Ascending aorta (tissue), 2 donors: ENCODE measurements at regions of chr13 and their contacts with region 1.

Region 1: GRCh38 chr13:20566898-20567874 is at the start of gene IFT88:
- DNase-seq: peak; percentile 45 to 93
- H3K4me3 ChIP-seq: peak within 1 kb of the TSS; percentile 60 to 85
- H3K27ac ChIP-seq: peak within 1 kb of the TSS; percentile 85 to 94
- H3K4me1 ChIP-seq: peaks cover 0 to 6% of the 10 kb centered on the region in 2 donors
- H3K27me3 ChIP-seq: no peaks in the 10 kb centered on the region
- CTCF ChIP-seq: peak in 1 of 3 experiments; percentile 22
- total RNA-seq, gene IFT88: 4.9 TPM

Region 2: DNA sequence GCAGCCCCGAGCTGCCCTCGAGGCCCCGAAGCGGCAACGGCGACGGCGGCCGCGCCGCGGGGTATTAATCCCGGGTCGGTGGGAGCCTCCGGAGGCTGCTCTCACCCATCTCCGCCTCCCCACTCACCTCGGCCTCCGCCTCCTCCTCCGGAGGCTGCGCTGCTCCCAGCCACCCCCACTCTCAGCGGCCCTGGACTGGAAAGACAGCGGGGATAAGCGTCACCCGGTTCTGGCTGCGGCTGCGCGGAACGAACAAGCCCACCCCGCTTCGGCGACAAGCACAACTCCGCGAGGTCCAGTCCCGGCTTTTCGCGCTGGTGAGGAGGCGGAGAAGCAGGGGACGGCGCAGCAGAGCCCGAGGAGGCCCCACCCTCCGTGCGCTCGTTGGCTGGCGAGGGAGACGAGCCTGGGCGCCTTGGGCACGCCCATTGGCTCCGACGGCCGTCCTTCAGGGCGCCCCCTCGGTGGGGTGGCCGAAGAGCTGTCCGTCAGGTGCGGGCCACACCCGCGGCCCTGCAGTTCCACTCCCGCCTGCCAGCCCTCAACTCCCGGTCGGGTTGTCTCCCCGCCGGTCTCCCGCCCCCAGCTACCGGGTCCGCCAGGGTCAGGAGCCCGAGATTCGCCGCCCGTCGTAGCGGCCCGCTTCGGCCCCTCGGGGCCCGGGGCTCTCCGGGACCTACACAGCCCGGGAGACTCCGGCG is 703.7 kb before region 1 on chr13 and contains the start of gene ZMYM5:
- intact Hi-C with region 1: loop called (anchors 10 kb)
- DNase-seq: peak; percentile 96 to 99
- H3K4me3 ChIP-seq: peak within 1 kb of the TSS; percentile 78 to 79
- H3K27ac ChIP-seq: peak within 1 kb of the TSS; percentile 97 to 99
- H3K4me1 ChIP-seq: peaks cover 4 to 26% of the 10 kb centered on the region in 2 donors
- H3K27me3 ChIP-seq: no peaks in the 10 kb centered on the region
- CTCF ChIP-seq: peak in 1 of 3 experiments; percentile 5
- total RNA-seq, gene ZMYM5: 14.2 TPM

Region 3: GRCh38 chr13:20418953-20419352 is 148.2 kb before region 1 on chr13:
- intact Hi-C with region 1: loop called (anchors 2 kb)
- DNase-seq: peak in 1 of 2 donors; percentile 21
- H3K4me3 ChIP-seq: no peak overlapping the region
- H3K27ac ChIP-seq: peak overlapping the region; percentile 69 to 75
- H3K4me1 ChIP-seq: peaks cover 0 to 9% of the 10 kb centered on the region in 2 donors
- H3K27me3 ChIP-seq: no peaks in the 10 kb centered on the region
- CTCF ChIP-seq: no peak

Region 4: DNA sequence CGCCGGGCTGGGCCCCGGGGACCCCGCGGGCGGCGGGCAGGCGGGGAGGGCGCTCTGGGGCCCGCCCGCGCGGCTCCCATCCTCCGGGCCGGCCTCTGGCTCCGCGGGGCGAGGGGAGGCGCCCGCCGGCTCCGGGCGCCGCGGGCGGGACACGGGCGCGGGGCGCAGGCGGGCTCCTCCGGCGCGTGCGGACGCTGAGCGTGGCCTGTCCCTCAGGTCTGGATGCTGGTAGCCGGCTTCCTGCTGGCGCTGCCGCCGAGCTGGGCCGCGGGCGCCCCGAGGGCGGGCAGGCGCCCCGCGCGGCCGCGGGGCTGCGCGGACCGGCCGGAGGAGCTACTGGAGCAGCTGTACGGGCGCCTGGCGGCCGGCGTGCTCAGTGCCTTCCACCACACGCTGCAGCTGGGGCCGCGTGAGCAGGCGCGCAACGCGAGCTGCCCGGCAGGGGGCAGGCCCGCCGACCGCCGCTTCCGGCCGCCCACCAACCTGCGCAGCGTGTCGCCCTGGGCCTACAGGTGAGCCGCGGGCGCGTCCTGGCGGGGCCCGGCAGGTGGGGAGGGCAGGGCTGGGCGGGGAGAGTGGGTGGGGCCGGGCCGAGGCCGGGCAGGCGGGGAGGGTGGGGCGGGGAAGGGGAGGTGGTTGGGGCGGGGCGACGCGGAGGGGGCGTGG is 136.7 kb after region 1 on chr13:
- intact Hi-C with region 1: loop called (anchors 5 kb)
- DNase-seq: peak in 1 of 2 donors; percentile 84
- H3K4me3 ChIP-seq: peak overlapping the region; percentile 70 to 95
- H3K27ac ChIP-seq: peak overlapping the region in 1 of 2 donors; percentile 38
- H3K4me1 ChIP-seq: peaks cover 3% of the 10 kb centered on the region in 2 donors
- H3K27me3 ChIP-seq: no peaks in the 10 kb centered on the region
- CTCF ChIP-seq: peak; percentile 16 to 81 (median 42)

Region 5: DNA sequence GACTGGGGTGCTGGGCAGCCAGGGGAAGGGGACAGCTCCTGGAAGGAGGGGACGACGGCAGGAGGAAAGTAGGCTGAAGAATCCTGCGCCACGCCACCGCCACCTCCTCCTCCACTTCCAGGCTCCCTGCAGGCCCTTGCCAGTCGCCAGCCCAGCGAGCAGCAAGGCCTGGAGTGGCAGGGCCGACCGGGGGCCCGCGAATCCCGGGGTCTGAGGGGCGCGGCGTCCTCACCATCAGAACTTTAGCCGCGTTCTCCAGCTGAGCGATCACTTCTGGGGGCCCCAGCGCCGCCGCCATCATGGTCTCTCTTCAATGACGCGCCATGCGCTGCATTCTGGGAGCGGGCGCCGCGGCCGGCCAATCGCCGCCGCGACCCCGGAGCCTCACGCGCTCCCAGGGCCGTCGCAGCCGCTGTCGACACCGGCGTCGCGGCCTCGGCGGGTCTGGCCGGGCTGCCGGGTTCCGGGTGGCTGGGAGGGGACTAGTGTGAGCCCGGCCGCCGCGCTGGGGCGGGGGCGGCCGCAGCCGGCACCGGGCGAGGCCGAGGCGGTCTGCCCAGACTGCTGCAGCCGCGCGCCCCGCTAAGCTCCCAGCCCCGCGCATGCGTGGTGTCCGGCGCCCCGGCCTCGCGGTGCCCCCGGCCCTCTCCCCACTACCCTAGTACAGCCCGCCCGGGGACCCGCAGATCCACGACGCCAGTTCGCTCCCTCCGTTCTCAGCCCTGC is 335.4 kb after region 1 on chr13 and contains the start of gene XPO4:
- intact Hi-C with region 1: loop called (anchors 5 kb)
- DNase-seq: peak; percentile 16 to 88
- H3K4me3 ChIP-seq: peak within 1 kb of the TSS; percentile 81 to 88
- H3K27ac ChIP-seq: peak within 1 kb of the TSS; percentile 93
- H3K4me1 ChIP-seq: peaks cover 3 to 10% of the 10 kb centered on the region in 2 donors
- H3K27me3 ChIP-seq: no peaks in the 10 kb centered on the region
- CTCF ChIP-seq: no peak
- total RNA-seq, gene XPO4: 5.1 TPM

Region 6: DNA sequence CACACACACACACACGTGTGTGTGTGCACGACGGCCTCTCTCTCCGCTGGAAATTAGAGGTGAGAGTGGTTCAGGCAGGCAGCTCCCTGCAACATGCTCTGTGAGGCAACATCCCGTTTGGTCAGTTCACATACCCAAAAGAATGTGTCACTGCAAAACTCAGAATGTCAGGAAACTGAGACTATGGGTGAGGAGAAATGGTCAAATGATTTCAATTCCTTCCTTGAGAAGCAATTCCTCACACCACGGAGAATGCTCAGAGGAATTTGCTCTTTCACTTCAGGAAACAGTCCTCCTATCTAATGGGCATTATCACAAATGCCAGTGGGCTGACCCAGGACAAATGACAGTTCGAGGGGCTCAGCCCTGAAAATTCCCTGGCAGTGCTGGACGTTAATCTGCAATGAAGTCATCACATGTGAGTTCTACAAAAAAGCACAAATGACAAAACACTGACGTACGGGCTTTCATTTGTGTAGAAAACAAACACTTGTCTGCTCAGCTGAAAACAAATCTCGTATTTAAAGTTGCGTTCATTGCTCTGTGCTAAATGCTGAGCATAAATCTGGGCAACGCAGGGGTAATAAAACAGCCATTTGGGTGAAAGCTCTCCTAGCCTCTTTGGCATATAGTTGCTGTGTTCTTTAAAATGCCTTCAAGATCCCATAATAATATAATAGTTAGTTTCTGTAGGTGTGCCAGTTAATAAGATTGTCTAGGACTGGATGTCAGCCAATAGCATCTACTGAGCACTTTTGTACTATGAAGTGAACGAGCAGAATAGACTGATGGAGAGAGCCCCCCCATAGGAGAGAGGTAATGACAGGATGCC is 512.8 kb after region 1 on chr13:
- intact Hi-C with region 1: no loop called
- DNase-seq: peak in 1 of 2 donors; percentile 83
- H3K4me3 ChIP-seq: peak overlapping the region; percentile 29 to 54
- H3K27ac ChIP-seq: peak overlapping the region; percentile 61 to 81
- H3K4me1 ChIP-seq: peaks cover 1 to 21% of the 10 kb centered on the region in 2 donors
- H3K27me3 ChIP-seq: no peaks in the 10 kb centered on the region
- CTCF ChIP-seq: no peak